HEK293 (cell line): ENCODE measurements at regions of chr9 and their contacts with region 1.

Region 1: GRCh38 chr9:129783516-129784361 is 19.2 kb upstream of the TOR1B start:
- H3K4me3 ChIP-seq: no peak overlapping the region
- H3K27ac ChIP-seq: no peak overlapping the region
- H3K4me1 ChIP-seq: no peaks in the 10 kb centered on the region
- CTCF ChIP-seq: peak; percentile 74

Region 2: GRCh38 chr9:129641746-129642513 is 141.8 kb before region 1 on chr9 and contains the start of gene ASB6:
- CTCF ChIA-PET with region 1: interaction called, 30 read pairs
- POLR2A ChIA-PET with region 1: interaction called, 3 read pairs
- H3K4me3 ChIP-seq: peak within 1 kb of the TSS; percentile 79
- H3K27ac ChIP-seq: peak within 1 kb of the TSS; percentile 70
- H3K4me1 ChIP-seq: peaks cover 11% of the 10 kb centered on the region
- CTCF ChIP-seq: peak; percentile 100

Region 3: DNA sequence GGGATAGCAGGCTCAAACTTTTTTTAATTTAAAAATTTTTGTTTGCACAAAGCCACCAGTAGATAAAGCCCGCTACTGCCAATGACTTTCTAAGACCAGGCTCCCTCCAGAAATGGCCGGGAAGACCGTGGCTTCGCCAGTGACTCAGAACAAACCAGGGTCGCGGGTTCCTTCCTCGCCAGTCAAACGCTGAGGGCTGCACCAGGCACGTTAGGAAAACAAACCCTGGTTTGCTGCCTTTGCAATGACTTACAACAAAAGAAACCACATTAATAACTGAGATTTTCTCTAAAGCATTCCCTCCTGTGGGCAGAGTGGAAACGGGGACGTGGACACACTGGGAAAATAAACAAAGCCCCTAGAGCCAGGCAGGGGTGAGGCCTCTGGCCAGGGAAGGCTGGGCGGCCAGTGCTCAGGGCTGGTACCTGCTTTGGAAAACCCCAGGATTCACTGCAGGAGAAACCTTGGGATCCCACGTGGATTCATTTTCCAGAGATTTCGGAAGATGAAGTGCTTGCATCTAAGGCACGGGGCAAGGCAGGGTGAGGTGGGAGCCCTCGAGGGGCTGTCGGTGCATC is 114.5 kb before region 1 on chr9:
- CTCF ChIA-PET with region 1: no interaction called
- POLR2A ChIA-PET with region 1: no interaction called
- H3K4me3 ChIP-seq: no peak overlapping the region
- H3K27ac ChIP-seq: no peak overlapping the region
- H3K4me1 ChIP-seq: no peaks in the 10 kb centered on the region
- CTCF ChIP-seq: no peak

Region 4: DNA sequence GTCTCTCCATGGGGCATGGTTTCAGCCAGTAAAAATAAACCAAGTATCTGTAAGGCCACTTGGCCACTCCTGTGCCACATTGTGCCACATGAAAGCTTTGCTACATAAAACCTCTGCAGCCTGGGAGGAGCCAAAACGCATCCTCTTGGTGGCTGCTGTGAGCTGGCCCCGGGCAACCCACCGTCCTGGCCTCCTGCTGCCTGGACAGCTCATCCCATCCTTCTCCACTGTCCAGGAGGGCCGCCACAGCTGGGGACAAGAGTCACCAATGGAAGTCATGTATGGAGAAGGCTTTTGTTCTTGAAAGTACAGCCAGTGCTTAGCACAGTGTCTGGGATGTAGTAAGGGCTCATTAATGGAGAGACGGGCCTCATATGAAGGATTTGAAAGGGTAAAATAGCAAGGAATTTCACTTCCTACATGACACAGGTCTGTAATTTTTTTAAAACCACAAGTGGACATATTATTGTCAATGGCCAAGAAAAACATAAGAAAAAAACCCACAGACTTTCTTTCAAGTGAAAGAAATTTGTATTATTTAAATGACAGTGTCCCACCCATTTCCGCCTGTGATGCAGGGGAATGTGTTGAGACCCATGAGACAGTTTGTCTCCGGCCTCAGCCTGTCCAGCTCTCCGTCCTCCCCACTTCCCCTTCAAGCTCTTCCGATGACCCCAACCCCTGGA is 37.5 kb before region 1 on chr9:
- CTCF ChIA-PET with region 1: interaction called, 220 read pairs
- POLR2A ChIA-PET with region 1: no interaction called
- H3K4me3 ChIP-seq: no peak overlapping the region
- H3K27ac ChIP-seq: no peak overlapping the region
- H3K4me1 ChIP-seq: no peaks in the 10 kb centered on the region
- CTCF ChIP-seq: no peak

Region 5: GRCh38 chr9:129752915-129753729 is 30.6 kb before region 1 on chr9 and contains the start of gene PTGES:
- CTCF ChIA-PET with region 1: interaction called, 27 read pairs
- POLR2A ChIA-PET with region 1: no interaction called
- H3K4me3 ChIP-seq: no peak within 1 kb of the TSS
- H3K27ac ChIP-seq: no peak within 1 kb of the TSS
- H3K4me1 ChIP-seq: no peaks in the 10 kb centered on the region
- CTCF ChIP-seq: no peak

Region 6: DNA sequence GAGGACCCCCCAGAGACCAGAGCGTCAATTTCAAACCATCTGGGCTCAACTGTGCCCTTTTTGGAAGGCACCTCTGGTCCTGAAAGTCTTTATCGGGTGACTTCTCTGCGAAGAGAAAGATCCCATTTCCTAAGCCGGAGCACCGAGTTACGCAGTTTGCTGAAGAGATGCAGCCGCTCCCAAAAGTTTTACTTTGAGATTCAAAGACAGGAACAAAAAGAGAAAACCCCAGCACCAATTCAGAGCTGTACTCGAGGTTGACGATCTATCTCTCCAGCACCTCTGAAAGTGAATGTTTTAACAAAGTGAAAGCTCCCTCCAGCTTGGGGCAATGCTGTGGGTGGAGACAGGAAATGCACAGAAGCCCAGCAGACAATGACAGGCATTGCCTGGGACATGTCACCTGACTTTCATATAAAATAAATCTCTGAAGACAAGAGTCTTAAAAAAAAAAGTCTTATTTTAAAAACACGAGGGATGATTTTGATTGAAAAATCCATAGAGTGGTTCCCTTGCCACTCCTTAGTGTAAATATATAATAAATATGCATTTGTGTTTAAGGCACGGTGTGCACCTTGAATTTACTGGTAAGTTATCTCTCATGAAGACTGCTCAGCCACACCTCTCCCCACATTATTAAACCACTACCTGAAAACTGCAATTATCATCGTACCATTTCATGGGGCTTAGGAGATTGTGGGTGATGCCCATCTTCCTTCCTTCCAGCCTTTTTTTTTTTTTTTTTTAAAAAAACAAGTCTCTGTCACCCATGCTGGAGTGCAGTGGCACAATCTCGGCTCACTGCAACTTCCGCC is 179.4 kb after region 1 on chr9:
- CTCF ChIA-PET with region 1: no interaction called
- POLR2A ChIA-PET with region 1: no interaction called
- H3K4me3 ChIP-seq: peak overlapping the region; percentile 21
- H3K27ac ChIP-seq: no peak overlapping the region
- H3K4me1 ChIP-seq: peaks cover 5% of the 10 kb centered on the region; the same call in 1 of the 2 replicates
- CTCF ChIP-seq: no peak

Region 7: DNA sequence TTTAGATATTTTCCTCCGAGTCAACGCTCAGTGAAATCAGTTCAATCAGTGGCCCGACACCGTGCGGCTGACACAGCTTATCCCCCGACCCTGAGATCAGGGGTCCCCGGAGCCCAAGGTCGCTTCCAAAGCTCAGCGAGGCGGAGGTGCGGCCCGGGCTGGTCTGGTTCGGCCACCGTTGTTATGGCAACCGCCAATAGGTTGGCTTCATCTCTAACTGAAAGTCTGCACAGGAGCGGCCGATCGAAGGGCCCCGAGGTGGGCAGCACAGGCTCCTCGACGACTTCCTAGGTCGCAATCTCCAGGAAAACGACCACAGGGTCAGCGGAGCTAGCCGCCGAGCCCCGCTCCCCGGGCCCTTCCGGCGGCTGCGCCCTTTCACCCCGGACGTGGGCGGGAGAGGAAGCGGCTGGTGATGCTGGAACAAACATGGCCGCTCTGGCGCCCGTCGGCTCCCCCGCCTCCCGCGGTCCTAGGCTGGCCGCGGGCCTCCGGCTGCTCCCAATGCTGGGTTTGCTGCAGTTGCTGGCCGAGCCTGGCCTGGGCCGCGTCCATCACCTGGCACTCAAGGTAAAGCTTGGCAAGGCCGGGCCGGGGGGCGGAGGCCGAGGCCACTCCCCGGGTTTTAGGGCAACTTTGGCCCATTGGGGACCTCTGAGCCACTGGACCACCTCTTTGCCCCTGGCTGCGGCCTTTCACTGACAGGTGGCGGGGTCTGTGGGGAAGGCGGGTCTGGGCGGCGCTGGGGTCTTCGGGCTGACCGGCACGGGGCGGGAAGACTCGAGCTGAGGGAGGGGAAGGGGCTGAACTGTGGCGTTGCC is 270.0 kb after region 1 on chr9 and contains the start of gene GPR107:
- CTCF ChIA-PET with region 1: no interaction called
- POLR2A ChIA-PET with region 1: no interaction called
- H3K4me3 ChIP-seq: peak within 1 kb of the TSS; percentile 91
- H3K27ac ChIP-seq: peak within 1 kb of the TSS; percentile 79
- H3K4me1 ChIP-seq: no peaks in the 10 kb centered on the region; the same call in 1 of the 2 replicates
- CTCF ChIP-seq: no peak